ENCODE measurements at regions of chr6 and their contacts with region 1.

Region 1: DNA sequence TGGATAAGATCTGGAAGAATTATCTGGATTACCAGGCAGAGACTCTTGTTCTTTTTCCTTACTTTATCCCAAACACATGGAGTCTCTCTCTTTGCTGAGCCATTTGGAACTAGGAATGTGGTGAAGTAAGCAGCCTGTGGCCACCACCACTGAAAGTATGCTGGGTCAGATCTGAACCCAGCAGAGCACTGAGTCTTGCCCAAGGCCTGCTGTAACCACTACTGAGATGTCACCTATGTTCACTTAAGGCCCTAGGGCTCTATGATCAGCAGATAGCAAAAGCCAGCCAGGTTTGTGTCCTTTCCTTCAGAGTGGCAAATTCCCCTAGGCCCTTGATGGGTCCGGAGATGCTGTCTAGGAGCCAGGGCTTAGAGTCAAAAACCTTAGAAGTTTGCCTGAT is 103.3 kb upstream of the PLN start:
- DNase-seq: no peak
- ATAC-seq: no peak
- H3K4me3 ChIP-seq: no peak overlapping the region
- H3K27ac ChIP-seq: no peak overlapping the region
- H3K4me1 ChIP-seq: no peaks in the 10 kb centered on the region
- H3K27me3 ChIP-seq: no peaks in the 10 kb centered on the region
- CTCF ChIP-seq: no peak

Region 2: DNA sequence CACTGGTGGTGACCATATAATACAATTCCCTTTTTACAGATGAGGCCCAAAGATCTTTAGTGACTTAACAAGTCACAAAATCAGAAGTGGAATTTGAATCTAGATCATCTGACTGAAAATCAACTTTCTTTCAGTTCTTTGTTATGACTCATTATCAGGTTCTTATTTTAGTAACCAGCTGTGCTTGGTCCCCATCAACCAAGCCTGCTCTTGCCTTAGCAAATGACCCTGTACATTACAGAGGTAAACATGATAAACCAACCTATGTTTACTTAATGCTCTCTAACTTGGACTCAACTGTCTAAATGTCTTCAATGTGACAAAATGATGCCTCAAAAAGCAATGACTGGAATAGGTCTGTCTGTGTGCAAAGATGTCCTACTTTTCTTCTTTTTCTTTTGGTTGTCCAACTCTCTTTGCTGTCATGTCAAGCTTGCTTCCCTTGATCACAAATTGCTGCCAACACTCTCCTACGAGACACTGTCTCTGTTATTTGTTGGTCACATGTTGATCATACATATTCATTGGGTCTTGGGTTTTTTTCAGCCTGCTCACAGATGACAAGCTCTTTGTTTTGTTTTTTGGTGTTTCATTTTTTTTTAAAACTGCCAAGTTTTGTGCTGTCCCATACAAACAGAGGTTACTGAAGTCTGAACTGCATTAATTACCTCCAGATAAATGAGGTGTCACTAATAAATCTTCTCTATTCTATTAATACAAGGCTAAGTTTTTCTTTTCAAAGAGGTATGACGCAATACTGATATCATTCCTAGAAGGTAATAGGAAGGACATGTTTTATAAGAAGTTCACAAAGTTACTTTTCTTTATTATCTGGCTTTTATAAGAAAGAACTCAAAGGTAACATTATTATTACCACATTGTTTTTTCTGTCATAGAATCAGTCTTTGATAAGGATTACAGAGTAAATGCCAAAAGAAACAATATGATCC is 41.1 kb after region 1 on chr6:
- intact Hi-C with region 1: loop called in 1 of 2 experiments (anchors 2 kb)
- DNase-seq: no peak
- ATAC-seq: peak in 2 of 4 donors; percentile 26 to 30
- H3K4me3 ChIP-seq: no peak overlapping the region
- H3K27ac ChIP-seq: no peak overlapping the region
- H3K4me1 ChIP-seq: peaks cover 12% of the 10 kb centered on the region
- H3K27me3 ChIP-seq: no peaks in the 10 kb centered on the region
- CTCF ChIP-seq: no peak